Activated T-helper 1 cell treated with anti-CD3 and anti-CD28 coated beads, Interleukin-12 subunit alpha, Interleukin-12 subunit beta, Interleukin-2, Interleukin-4 antibody, amounts not matched to agents 30 ng/mL and 10 ng/mL and 1 ng/mL, durations not matched to agents 14 hours and 24 hours and 36 hours (primary cell): ENCODE measurements at regions of chr2 and their contacts with region 1.

Region 1: GRCh38 chr2:233353769-233354499 is at the start of gene DGKD:
- DNase-seq: no peak
- H3K4me3 Mint-ChIP-seq: peak within 1 kb of the TSS; percentile 87
- H3K27ac Mint-ChIP-seq: peak within 1 kb of the TSS; percentile 90
- H3K4me1 Mint-ChIP-seq: peaks cover 67% of the 10 kb centered on the region
- H3K27me3 Mint-ChIP-seq: no peaks in the 10 kb centered on the region
- total RNA-seq, gene DGKD: 42.5 and 43.7 TPM in 2 replicates

Region 2: GRCh38 chr2:233331536-233331935 is 22.4 kb before region 1 on chr2:
- intact Hi-C with region 1: loop called (anchors 2 kb)
- DNase-seq: peak; percentile 70
- H3K4me3 Mint-ChIP-seq: peak overlapping the region; percentile 63
- H3K27ac Mint-ChIP-seq: peak overlapping the region; percentile 97
- H3K4me1 Mint-ChIP-seq: peaks cover 41% of the 10 kb centered on the region
- H3K27me3 Mint-ChIP-seq: peaks cover 4% of the 10 kb centered on the region

Region 3: GRCh38 chr2:233443468-233444183 is 89.7 kb after region 1 on chr2:
- intact Hi-C with region 1: loop called (anchors 1 kb)
- DNase-seq: peak; percentile 67
- H3K4me3 Mint-ChIP-seq: no peak overlapping the region
- H3K27ac Mint-ChIP-seq: peak overlapping the region; percentile 56
- H3K4me1 Mint-ChIP-seq: peaks cover 21% of the 10 kb centered on the region
- H3K27me3 Mint-ChIP-seq: no peaks in the 10 kb centered on the region

Region 4: DNA sequence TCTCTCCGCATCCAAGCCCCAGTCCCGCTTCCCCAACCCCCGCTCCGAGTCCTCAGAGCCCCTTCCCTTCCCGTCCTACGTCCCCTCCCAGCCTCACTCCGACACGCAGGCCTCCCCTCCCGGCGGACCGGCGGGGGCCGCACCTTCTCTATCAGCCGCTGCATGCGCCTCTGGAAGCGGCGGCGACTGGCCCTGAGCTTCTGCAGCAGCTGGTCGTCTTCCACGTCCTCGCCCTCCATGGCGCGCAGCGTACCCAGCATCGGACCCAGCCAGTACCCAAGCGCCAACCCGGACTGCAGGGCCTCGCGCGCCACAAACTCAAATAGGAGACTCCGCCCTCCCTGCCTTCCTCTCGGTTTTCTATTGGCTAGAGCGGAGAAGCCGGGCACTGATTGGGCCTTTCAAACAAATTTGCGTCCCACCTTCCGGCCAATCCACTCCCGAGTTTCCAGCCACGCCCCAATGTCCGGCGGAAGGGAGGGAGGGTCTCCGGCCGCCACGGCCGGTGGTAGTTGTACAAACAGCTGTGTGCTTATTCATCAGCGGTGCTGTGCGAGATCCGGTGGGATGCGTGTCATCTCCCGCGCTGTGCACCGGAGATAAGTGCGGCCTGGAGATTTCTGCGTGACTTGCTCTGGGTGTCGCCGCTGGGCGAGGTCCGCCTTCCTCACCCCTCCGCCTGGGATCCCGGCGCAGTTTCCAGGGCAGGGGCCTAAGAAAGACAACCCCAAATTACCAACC is 500.5 kb after region 1 on chr2 and contains the start of gene HJURP:
- intact Hi-C with region 1: no loop called
- DNase-seq: peak; percentile 95
- H3K4me3 Mint-ChIP-seq: peak within 1 kb of the TSS; percentile 94
- H3K27ac Mint-ChIP-seq: peak within 1 kb of the TSS; percentile 97
- H3K4me1 Mint-ChIP-seq: peaks cover 63% of the 10 kb centered on the region
- H3K27me3 Mint-ChIP-seq: no peaks in the 10 kb centered on the region
- total RNA-seq, gene HJURP: 38.2 and 40.4 TPM in 2 replicates